Ascending aorta (tissue), 2 donors: ENCODE measurements at regions of chr5 and their contacts with region 1.

Region 1: DNA sequence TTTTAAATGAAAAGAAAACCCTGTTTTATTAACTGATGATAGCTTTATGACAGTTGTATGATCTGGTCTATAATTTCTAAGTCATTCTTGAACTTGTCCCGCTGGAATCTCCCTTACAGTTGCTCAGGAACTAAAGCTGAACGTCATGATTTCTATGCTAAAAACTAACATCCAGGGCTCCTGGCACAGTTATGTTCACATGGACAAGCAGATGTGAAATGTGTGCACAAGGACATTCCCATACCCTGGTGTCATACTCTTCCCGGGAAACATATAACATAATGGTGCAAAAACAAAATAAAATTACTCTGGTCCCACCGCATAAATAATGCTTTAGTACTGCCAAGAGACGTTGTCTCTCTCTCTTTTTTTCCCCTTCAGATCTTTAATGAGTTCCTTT is 134.9 kb downstream of the PRDM6 start:
- DNase-seq: no peak
- H3K4me3 ChIP-seq: no peak overlapping the region
- H3K27ac ChIP-seq: peak overlapping the region; percentile 8 to 21
- H3K4me1 ChIP-seq: peaks cover 4 to 14% of the 10 kb centered on the region in 2 donors
- H3K27me3 ChIP-seq: no peaks in the 10 kb centered on the region
- CTCF ChIP-seq: no peak

Region 2: DNA sequence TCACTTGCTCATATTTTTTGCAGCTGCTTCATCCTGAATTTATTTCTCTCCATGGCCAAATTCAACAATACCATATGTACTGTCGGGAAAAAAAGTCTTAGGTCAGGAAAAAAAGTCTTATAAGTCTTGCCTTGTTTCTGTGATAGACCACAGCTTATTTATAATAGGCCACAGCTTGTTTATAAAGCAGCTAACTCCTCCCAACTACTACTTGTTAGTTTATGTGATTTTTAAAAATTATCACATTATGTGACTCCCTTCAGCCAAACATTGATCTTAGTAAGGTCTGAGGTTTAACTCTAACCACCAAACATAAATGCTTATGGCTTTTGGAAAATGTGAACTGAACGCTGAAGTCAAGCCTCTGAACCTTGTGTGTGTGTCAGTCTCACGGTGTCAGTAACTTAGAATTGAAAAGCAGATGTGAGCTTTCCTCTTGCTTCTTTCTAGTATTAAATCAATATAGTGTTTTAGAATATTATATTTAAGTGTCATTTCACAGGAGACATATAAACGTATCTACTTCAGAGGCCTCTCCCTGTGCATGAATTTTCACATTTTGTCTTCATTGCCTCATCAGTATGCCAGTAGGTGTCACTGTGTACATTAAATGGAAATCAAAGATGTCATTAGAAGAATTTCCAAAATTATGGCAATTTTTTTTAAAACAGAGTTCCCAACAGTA is 327.2 kb before region 1 on chr5:
- intact Hi-C with region 1: no loop called
- DNase-seq: no peak
- H3K4me3 ChIP-seq: no peak overlapping the region
- H3K27ac ChIP-seq: no peak overlapping the region
- H3K4me1 ChIP-seq: no peaks in the 10 kb centered on the region
- H3K27me3 ChIP-seq: no peaks in the 10 kb centered on the region
- CTCF ChIP-seq: peak; percentile 15 to 67 (median 40)

Region 3: GRCh38 chr5:123244458-123244857 is 20.5 kb after region 1 on chr5:
- intact Hi-C with region 1: loop called (anchors 2 kb)
- DNase-seq: no peak
- H3K4me3 ChIP-seq: peak overlapping the region in 1 of 2 donors; percentile 29
- H3K27ac ChIP-seq: peak overlapping the region; percentile 61 to 84
- H3K4me1 ChIP-seq: peaks cover 0 to 6% of the 10 kb centered on the region in 2 donors
- H3K27me3 ChIP-seq: no peaks in the 10 kb centered on the region
- CTCF ChIP-seq: no peak

Region 4: DNA sequence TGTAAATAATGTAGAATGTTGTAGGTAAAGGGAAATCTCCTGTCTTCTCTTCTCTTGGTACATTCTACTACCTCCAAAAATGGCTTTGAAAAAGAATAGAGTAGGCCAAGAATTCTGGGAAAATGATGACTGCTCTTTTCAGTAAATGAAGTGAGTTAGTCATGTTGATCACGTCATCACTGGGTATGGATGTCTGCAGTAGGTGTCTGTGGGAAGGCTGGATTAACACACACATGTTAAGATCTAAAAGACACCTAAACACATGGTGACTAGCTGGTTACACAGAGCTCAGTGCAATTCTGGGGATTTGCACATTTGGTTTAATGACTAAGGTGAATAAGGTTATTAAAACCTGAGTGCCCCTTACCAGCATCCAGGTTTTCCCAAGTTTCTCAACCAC is 37.8 kb after region 1 on chr5:
- intact Hi-C with region 1: loop called (anchors 5 kb)
- DNase-seq: no peak
- H3K4me3 ChIP-seq: no peak overlapping the region
- H3K27ac ChIP-seq: peak overlapping the region; percentile 66 to 74
- H3K4me1 ChIP-seq: peaks cover 8 to 21% of the 10 kb centered on the region in 2 donors
- H3K27me3 ChIP-seq: no peaks in the 10 kb centered on the region
- CTCF ChIP-seq: no peak

Region 5: GRCh38 chr5:123294544-123294943 is 70.6 kb after region 1 on chr5:
- intact Hi-C with region 1: no loop called
- DNase-seq: no peak
- H3K4me3 ChIP-seq: no peak overlapping the region
- H3K27ac ChIP-seq: peak overlapping the region; percentile 46 to 57
- H3K4me1 ChIP-seq: peaks cover 0 to 7% of the 10 kb centered on the region in 2 donors
- H3K27me3 ChIP-seq: no peaks in the 10 kb centered on the region
- CTCF ChIP-seq: no peak

Region 6: DNA sequence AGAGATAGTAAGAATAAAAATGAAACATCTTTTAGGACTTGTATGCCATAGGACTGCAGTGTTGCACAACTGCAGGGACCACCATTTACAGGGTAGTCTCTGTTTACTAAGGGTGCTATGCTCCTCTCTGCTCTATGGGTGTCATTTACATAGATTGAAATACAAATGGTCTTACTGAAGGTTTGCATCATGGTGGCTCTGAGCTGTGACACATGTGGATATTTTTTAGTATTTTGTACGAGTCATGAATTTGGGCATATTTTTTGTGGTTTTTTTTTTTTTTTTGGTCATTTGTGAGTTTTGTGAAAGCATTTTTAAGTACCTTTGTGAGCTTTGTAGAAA is 335.5 kb after region 1 on chr5:
- intact Hi-C with region 1: no loop called
- DNase-seq: no peak
- H3K4me3 ChIP-seq: no peak overlapping the region
- H3K27ac ChIP-seq: no peak overlapping the region
- H3K4me1 ChIP-seq: no peaks in the 10 kb centered on the region
- H3K27me3 ChIP-seq: no peaks in the 10 kb centered on the region
- CTCF ChIP-seq: no peak